ENCODE measurements at regions of chr5 and their contacts with region 1.

Region 1: DNA sequence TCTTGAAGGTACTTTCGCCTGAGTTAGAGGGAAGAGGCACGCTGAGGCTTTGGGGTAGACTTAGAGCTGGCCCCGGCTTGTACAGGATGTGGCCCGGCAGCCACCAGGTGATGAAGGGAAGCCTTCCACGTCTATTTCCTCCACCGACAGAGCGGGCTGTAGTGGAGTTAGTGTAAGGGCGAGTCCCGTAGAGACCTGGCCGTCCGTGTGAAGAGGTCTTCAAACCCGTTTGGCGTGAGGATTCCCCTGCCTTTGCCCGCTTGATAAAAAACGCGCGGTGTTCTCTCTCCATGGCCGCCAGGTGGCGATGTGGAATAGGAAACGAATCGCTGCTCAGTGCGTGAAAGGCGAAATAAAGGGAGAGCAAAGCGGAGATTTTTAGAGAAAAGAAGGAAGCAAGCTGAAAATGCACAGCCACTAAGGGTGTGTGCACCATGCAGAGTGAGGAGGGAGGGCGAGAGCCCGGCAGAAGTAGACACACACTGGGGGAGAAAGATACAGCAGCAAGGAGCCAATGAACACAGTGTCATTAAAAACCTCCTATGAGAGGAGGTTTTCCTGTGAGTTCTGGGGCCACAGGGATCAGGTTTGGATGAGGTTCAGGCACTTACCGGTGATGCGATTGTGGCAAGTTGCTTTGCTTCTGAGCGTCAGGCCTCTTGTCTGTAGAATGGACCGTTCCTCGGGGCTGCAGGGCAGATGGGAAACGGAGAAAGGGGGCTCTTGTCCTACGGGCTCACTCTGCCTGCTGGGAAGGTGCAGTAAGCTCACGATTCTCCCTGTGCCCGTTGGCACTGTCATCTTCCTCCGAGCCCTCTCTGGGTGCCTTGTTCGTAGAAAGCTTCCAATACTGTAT is 34.2 kb downstream of the STC2 start:
- DNase-seq: peak in 1 of 2 donors; percentile 75
- ATAC-seq: peak; percentile 69

Region 2: DNA sequence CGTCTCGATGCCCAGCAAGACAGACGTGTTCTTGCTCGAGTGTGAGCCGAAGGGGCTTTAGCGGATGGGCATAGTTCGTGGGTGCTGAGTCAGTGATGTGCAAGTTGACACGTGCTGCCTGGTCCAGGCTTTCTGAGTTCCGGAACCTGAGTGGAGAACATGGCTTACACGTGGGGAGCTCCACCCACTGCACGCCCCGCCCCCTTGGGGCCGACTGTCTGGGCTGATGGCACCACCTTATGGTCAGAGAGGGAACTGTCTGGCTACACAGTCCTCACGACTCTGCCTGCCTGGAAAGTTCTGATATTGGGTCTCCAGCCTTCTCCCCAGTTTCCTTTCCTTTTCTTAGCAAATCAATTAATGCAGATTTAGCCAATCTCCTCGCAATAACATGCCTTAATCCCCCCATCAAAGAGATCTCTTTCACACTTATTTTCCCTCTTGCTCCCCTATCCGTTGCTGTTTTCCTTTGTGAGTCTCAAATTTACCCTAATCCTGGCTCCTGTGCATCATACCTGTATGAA is 38.0 kb after region 1 on chr5:
- intact Hi-C with region 1: loop called in 1 of 2 experiments (anchors 2 kb)
- DNase-seq: peak; percentile 72 to 89
- ATAC-seq: peak; percentile 96

Region 3: DNA sequence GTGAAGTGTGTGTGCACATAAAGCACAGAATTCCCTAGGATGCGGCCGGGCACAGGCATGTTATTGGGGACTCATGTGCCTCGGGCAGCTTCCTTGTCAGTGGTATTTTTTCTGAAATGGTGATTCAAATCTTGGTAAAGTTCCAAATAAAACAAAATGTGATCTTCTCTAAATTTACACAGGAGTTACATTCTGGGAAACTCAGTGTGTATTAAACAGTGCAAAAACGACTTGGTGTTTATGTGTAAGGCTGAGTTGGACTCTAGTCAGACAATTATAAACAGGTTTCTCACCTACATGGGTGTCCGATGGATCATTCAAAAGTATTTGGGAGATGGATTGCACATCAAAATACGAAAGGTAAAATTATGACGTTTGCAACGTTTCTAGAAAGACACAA is 273.5 kb after region 1 on chr5:
- intact Hi-C with region 1: loop called (anchors 10 kb)
- DNase-seq: no peak
- ATAC-seq: no peak

Region 4: GRCh38 chr5:173573126-173573960 is 279.3 kb after region 1 on chr5:
- intact Hi-C with region 1: loop called (anchors 10 kb)
- DNase-seq: peak; percentile 39 to 60
- ATAC-seq: peak; percentile 90

Region 5: GRCh38 chr5:174311531-174312269 is 1017.7 kb after region 1 on chr5:
- intact Hi-C with region 1: loop called in 1 of 2 experiments (anchors 10 kb)
- DNase-seq: peak in 1 of 2 donors; percentile 77
- ATAC-seq: peak; percentile 79